ENCODE measurements at regions of chr18 and their contacts with region 1.

Region 1: GRCh38 chr18:56638271-56639093 is at the start of gene TXNL1:
- DNase-seq: peak; percentile 94 to 96
- H3K4me3 ChIP-seq: peak within 1 kb of the TSS; percentile 67
- H3K4me3 Mint-ChIP-seq: peak within 1 kb of the TSS; percentile 91
- H3K27ac Mint-ChIP-seq: peak within 1 kb of the TSS; percentile 98
- H3K4me1 ChIP-seq: no peaks in the 10 kb centered on the region
- H3K4me1 Mint-ChIP-seq: peaks cover 6% of the 10 kb centered on the region
- H3K27me3 ChIP-seq: no peaks in the 10 kb centered on the region
- H3K27me3 Mint-ChIP-seq: no peaks in the 10 kb centered on the region
- CTCF ChIP-seq: no peak
- total RNA-seq, gene TXNL1: 46.9 and 49.0 TPM in 2 replicates

Region 2: DNA sequence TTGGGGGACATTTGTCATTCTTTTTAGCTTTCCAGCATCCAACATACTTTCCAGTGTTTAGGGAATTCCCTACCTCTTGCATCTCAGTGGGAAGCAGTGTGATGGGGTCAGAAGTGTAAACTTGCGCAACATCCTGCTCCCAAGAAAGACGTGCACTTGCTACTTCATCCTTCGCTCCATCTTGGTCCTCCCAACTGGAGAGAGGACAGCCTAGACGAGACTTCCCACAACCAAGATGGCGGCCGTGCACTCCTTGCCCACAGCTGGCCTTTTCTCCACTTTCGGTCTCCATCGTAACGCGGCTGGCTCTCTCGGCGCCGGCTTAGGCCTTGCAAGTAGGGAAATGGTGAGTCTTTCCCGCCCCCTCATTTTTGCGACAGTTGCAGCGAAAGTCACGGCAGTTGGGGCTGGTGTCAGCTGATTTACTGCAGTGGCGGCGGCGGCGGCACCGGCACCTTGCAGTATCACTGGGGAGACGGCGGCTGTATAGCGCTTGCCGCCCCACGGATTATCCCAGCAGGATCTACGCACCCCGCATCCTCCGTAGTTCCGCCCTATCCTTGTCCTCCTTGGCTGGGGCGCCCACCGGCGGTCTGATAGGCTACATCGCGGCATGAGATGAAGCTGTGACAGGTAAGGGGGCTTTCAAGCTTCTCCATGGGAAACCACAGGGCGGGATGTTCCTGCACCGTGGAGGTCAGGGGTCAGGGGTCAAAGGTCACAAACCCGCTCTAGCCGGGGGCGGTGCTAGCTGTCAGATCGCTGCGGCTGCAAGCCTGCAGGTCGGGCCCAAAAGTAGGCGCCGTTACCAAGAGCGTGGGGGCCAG is 12.7 kb after region 1 on chr18 and contains the start of gene WDR7:
- CTCF ChIA-PET with region 1: no interaction called
- POLR2A ChIA-PET with region 1: no interaction called
- intact Hi-C with region 1: loop called (anchors 1 kb)
- DNase-seq: peak; percentile 89 to 93
- H3K4me3 ChIP-seq: peak within 1 kb of the TSS; percentile 50
- H3K4me3 Mint-ChIP-seq: peak within 1 kb of the TSS; percentile 71
- H3K27ac Mint-ChIP-seq: peak within 1 kb of the TSS; percentile 21
- H3K4me1 ChIP-seq: no peaks in the 10 kb centered on the region
- H3K4me1 Mint-ChIP-seq: peaks cover 6% of the 10 kb centered on the region
- H3K27me3 ChIP-seq: no peaks in the 10 kb centered on the region
- H3K27me3 Mint-ChIP-seq: no peaks in the 10 kb centered on the region
- CTCF ChIP-seq: no peak
- total RNA-seq, gene WDR7: 7.8 and 8.1 TPM in 2 replicates

Measured in Caco-2 (cell line).